ENCODE measurements at regions of chr14 and their contacts with region 1.

Region 1: GRCh38 chr14:90758028-90758889 is 58.0 kb downstream of the TTC7B start:
- DNase-seq: peak; percentile 74
- H3K4me3 ChIP-seq: peak overlapping the region; percentile 78
- H3K27ac ChIP-seq: peak overlapping the region; percentile 57
- H3K27me3 ChIP-seq: no peaks in the 10 kb centered on the region
- CTCF ChIP-seq: peak; percentile 84

Region 2: GRCh38 chr14:90288651-90289355 is 469.5 kb before region 1 on chr14:
- CTCF ChIA-PET with region 1: interaction called, 36 read pairs
- POLR2A ChIA-PET with region 1: no interaction called
- DNase-seq: no peak
- H3K4me3 ChIP-seq: no peak overlapping the region
- H3K27ac ChIP-seq: no peak overlapping the region
- H3K27me3 ChIP-seq: no peaks in the 10 kb centered on the region
- CTCF ChIP-seq: no peak

Region 3: DNA sequence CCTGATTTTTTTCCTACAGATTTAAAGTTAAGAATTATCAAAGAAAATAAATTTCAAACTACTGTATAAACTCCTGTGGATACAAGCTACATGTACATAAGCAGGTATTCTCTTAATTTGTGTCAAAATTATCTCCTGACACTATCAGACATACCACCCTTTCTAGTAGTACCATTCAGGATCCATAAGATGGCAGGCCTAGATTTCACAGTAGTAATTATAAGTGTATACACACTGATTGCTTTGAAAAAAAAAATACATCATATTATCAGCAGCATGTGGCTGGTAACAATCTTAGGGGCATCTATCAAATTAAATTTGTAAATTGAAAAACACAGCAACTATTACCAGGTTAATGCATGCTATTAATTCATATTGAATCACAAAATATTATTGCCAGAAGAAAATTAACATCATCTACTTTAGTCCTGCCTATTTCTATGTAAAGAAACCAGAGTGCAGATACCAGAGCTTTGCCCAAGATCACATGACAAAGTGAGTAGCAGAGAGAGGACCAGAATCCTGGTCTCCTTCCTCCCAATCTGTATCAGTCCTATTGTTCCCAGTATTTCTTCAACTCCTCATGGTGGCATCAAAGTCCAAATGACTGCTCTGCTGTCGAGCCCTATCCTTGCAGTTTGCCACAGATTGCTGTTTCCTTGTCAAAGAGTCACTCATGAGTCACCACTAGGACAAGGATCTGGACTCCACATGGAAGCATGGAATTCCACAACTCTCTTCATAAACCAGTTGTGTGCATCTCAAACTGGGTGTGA is 389.1 kb before region 1 on chr14:
- CTCF ChIA-PET with region 1: interaction called, 11 read pairs
- POLR2A ChIA-PET with region 1: no interaction called
- DNase-seq: no peak
- H3K4me3 ChIP-seq: no peak overlapping the region
- H3K27ac ChIP-seq: no peak overlapping the region
- H3K27me3 ChIP-seq: peaks cover 6% of the 10 kb centered on the region
- CTCF ChIP-seq: no peak

Region 4: GRCh38 chr14:90399541-90400444 is 358.5 kb before region 1 on chr14:
- CTCF ChIA-PET with region 1: interaction called, 85 read pairs
- POLR2A ChIA-PET with region 1: interaction called, 12 read pairs
- DNase-seq: peak; percentile 61
- H3K4me3 ChIP-seq: peak overlapping the region; percentile 97
- H3K27ac ChIP-seq: peak overlapping the region; percentile 40
- H3K27me3 ChIP-seq: no peaks in the 10 kb centered on the region
- CTCF ChIP-seq: peak; percentile 99

Region 5: GRCh38 chr14:90697577-90698206 is 60.6 kb before region 1 on chr14:
- CTCF ChIA-PET with region 1: interaction called, 26 read pairs
- POLR2A ChIA-PET with region 1: interaction called, 3 read pairs
- DNase-seq: no peak
- H3K4me3 ChIP-seq: no peak overlapping the region
- H3K27ac ChIP-seq: no peak overlapping the region
- H3K27me3 ChIP-seq: no peaks in the 10 kb centered on the region
- CTCF ChIP-seq: peak; percentile 96

Region 6: DNA sequence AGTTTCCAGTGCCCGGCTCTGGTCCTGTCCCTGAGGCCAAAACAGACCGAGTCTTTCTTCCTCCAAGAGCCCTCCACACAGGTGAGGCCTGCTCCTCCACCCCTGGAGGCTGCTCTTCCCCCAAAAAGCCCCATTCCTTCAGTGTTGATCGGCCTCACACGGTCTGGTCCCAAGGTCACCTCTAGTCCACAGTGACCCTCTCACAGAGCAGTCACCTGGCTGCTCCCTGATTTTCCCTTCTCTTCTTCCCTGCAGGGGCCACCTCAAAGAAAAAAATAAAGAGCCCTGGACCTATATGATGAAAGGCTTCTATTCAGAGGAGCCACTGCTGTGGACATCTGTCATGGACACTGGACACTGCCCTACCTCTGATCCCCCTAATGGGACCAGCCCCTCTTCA is 15.4 kb after region 1 on chr14:
- CTCF ChIA-PET with region 1: interaction called, 59 read pairs
- POLR2A ChIA-PET with region 1: interaction called, 3 read pairs
- DNase-seq: no peak
- H3K4me3 ChIP-seq: no peak overlapping the region
- H3K27ac ChIP-seq: no peak overlapping the region
- H3K27me3 ChIP-seq: no peaks in the 10 kb centered on the region
- CTCF ChIP-seq: no peak

Region 7: DNA sequence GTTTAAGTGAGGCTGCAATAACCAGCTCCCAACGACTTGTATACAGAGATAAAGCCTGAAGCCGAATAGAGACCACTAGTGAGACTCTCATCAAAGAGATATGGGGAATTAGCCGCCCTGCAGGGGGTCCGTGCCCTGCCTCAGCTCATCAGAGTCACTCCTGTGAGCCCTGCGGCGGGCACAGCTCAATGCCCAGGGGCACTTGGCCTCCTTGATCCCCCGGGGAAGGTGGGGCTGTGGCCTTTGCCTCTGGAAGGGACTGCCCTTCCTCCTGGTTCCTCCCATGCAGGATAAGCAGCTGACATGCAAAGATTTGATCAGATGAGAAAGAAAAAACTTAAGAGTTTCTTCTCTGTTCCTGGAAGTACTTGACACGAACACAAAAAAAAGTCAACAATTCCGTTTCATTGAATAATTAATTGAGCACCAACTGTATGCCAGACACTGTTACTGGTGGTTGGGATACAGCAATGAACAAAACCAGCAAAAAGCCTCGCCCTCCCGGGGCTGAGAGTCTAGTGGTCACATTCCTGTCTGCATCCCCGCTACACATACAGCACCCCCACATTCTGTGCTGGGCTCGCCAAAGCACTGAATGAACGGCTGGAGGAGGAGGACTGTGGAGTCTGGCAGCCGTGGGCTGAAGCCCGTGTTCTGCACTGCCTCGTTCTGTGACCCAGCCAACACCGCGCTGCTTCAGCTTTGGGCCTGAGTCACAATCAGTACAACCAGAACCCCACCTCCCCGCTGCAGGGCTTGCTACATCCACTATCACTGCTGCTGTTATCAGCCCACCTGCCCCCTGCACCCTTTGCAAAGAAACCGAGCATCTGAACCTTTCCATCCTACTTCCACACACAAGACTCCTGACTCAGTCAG is 47.6 kb after region 1 on chr14:
- CTCF ChIA-PET with region 1: no interaction called
- POLR2A ChIA-PET with region 1: no interaction called
- DNase-seq: no peak
- H3K4me3 ChIP-seq: no peak overlapping the region
- H3K27ac ChIP-seq: no peak overlapping the region
- H3K27me3 ChIP-seq: no peaks in the 10 kb centered on the region
- CTCF ChIP-seq: no peak

Measured in AG04450 (cell line).